Transverse colon (tissue), 4 donors: ENCODE measurements at regions of chr10 and their contacts with region 1.

Region 1: DNA sequence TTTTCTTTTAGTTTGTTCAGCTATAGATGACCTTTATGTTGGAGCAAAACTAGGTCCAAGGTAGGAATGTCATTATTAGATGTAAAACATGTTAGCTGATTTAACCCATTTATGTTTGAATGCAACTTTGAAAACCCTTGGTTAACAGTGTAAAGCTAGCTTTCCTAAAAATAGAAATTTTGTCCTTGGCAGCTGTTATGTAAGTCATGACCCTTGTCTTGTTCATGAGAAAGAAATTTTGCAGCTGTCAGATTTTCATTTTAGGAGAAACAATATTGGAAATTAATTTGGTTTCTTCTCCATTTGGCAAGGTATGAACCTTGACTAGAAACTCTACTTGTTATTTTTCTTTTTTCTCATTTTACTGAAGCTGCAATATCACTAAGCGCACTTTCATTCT is 23.9 kb upstream of the CCAR1 start:
- DNase-seq: no peak
- H3K4me3 ChIP-seq: no peak overlapping the region
- H3K27ac ChIP-seq: no peak overlapping the region
- H3K4me1 ChIP-seq: no peaks in the 10 kb centered on the region
- H3K27me3 ChIP-seq: no peaks in the 10 kb centered on the region
- CTCF ChIP-seq: no peak
- EP300 ChIP-seq: no peak
- POLR2A ChIP-seq: no peak

Region 2: GRCh38 chr10:68284062-68285001 is 412.8 kb before region 1 on chr10:
- in situ Hi-C with region 1: no loop called
- intact Hi-C with region 1: no loop called
- DNase-seq: no peak
- H3K4me3 ChIP-seq: no peak overlapping the region
- H3K27ac ChIP-seq: no peak overlapping the region
- H3K4me1 ChIP-seq: no peaks in the 10 kb centered on the region
- H3K27me3 ChIP-seq: no peaks in the 10 kb centered on the region
- CTCF ChIP-seq: no peak
- EP300 ChIP-seq: no peak
- POLR2A ChIP-seq: no peak

Region 3: GRCh38 chr10:68666280-68666760 is 30.8 kb before region 1 on chr10:
- in situ Hi-C with region 1: no loop called
- intact Hi-C with region 1: loop called (anchors 1 kb)
- DNase-seq: no peak
- H3K4me3 ChIP-seq: no peak overlapping the region
- H3K27ac ChIP-seq: no peak overlapping the region
- H3K4me1 ChIP-seq: no peaks in the 10 kb centered on the region
- H3K27me3 ChIP-seq: no peaks in the 10 kb centered on the region
- CTCF ChIP-seq: no peak
- EP300 ChIP-seq: no peak
- POLR2A ChIP-seq: no peak